Common myeloid progenitor, CD34-positive (primary cell): ENCODE measurements at regions of chr7 and their contacts with region 1.

Region 1: GRCh38 chr7:149809215-149809614 is 29.0 kb upstream of the ZNF862 start:
- DNase-seq: no peak
- H3K4me3 ChIP-seq: no peak overlapping the region
- H3K27ac ChIP-seq: no peak overlapping the region
- H3K4me1 ChIP-seq: no peaks in the 10 kb centered on the region
- H3K27me3 ChIP-seq: no peaks in the 10 kb centered on the region

Region 2: DNA sequence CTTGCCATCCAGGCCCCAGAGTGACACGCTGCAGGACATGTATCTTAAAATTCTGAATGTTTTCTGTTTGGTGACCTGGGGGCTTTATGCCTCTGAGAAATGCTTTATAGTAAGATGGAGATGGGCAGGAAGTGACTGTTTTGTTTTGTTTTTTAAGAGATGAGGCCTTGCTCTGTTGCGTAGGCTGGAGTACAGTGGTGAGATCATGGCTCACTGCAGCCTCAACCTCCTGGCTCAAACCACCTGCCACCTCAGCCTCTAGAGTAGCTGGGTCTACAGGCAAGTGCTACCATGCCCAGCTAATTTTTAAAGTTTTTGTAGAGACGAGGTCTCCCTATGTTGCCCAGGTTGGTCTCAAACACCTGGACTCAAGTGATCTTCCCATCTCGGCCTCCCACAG is 369.0 kb before region 1 on chr7:
- CTCF ChIA-PET with region 1: no interaction called
- POLR2A ChIA-PET with region 1: no interaction called
- DNase-seq: no peak
- H3K4me3 ChIP-seq: no peak overlapping the region
- H3K27ac ChIP-seq: no peak overlapping the region
- H3K4me1 ChIP-seq: no peaks in the 10 kb centered on the region
- H3K27me3 ChIP-seq: no peaks in the 10 kb centered on the region

Region 3: GRCh38 chr7:149714050-149714909 is 94.9 kb before region 1 on chr7:
- CTCF ChIA-PET with region 1: no interaction called
- POLR2A ChIA-PET with region 1: no interaction called
- DNase-seq: peak; percentile 84 to 92 (median 90)
- H3K4me3 ChIP-seq: peak overlapping the region; percentile 56 to 89 (median 73)
- H3K27ac ChIP-seq: no peak overlapping the region
- H3K4me1 ChIP-seq: peaks cover 0 to 25% (median 22%) of the 10 kb centered on the region in 4 experiments
- H3K27me3 ChIP-seq: peaks cover 0 to 4% (median 0%) of the 10 kb centered on the region in 5 experiments

Region 4: GRCh38 chr7:149764481-149765398 is 44.5 kb before region 1 on chr7:
- CTCF ChIA-PET with region 1: no interaction called
- POLR2A ChIA-PET with region 1: no interaction called
- DNase-seq: no peak
- H3K4me3 ChIP-seq: no peak overlapping the region
- H3K27ac ChIP-seq: no peak overlapping the region
- H3K4me1 ChIP-seq: no peaks in the 10 kb centered on the region
- H3K27me3 ChIP-seq: no peaks in the 10 kb centered on the region

Region 5: GRCh38 chr7:149822353-149822943 is 13.2 kb after region 1 on chr7:
- CTCF ChIA-PET with region 1: interaction called, 39 read pairs
- POLR2A ChIA-PET with region 1: no interaction called
- DNase-seq: no peak
- H3K4me3 ChIP-seq: no peak overlapping the region
- H3K27ac ChIP-seq: no peak overlapping the region
- H3K4me1 ChIP-seq: peaks cover 0 to 2% (median 0%) of the 10 kb centered on the region in 4 experiments
- H3K27me3 ChIP-seq: no peaks in the 10 kb centered on the region